Activated B cell treated with CpG ODN at 0.5 μM for 24 hours (primary cell): ENCODE measurements at regions of chr16 and their contacts with region 1.

Region 1: DNA sequence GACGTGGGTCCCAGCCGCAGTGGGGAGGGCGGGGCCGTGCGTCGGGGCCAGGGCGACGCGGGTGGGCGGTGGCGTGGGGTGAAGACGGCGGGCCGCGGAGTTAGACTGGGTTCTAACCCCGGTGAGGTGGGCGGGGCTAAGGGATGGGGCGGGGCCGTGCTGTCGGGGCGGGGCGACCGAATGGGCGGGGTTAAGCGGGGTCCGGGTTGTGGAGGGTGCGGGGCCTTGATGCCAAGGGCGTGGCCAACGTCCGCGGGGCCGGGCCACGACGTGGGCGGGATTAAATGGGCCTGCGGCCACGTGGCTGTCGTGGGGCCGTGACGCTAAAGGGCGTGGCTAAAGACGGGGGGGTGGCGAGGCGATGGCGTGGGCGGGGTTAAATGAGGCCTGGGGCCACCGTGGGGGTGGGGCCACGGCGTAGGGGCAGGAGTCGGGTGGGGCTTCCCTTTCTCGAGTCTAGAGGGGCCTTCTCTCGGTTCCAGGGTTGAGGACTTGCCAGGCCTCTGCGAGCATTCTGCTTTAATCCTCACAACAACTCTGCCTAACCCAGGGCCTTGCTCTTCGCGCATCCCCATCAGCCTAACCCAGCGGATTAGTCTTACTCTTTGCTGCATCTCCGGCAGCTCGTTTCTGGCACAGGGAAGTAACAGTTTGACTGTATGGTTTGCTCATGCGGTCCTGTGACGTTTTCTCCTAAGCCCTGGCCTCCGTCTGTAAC is 739 bp downstream of the TCF25 start:
- DNase-seq: peak; percentile 98
- ATAC-seq: peak; percentile 84
- H3K4me3 Mint-ChIP-seq: peak overlapping the region; percentile 93
- H3K27ac Mint-ChIP-seq: peak overlapping the region; percentile 97
- H3K4me1 Mint-ChIP-seq: peaks cover 17% of the 10 kb centered on the region
- H3K27me3 Mint-ChIP-seq: no peaks in the 10 kb centered on the region
- CTCF ChIP-seq: no peak

Region 2: GRCh38 chr16:89560378-89561141 is 313.6 kb before region 1 on chr16 and contains the start of gene RPL13:
- CTCF ChIA-PET with region 1: no interaction called
- POLR2A ChIA-PET with region 1: interaction called, 4 read pairs
- intact Hi-C with region 1: loop called (anchors 5 kb)
- DNase-seq: peak; percentile 83
- ATAC-seq: peak; percentile 92
- H3K4me3 Mint-ChIP-seq: peak within 1 kb of the TSS; percentile 96
- H3K27ac Mint-ChIP-seq: peak within 1 kb of the TSS; percentile 97
- H3K4me1 Mint-ChIP-seq: peaks cover 48% of the 10 kb centered on the region
- H3K27me3 Mint-ChIP-seq: no peaks in the 10 kb centered on the region
- CTCF ChIP-seq: no peak
- total RNA-seq, gene RPL13: 3,566 and 4,063 TPM in 2 replicates

Region 3: GRCh38 chr16:89686520-89687091 is 187.5 kb before region 1 on chr16 and contains the start of gene CDK10:
- CTCF ChIA-PET with region 1: no interaction called
- POLR2A ChIA-PET with region 1: interaction called, 6 read pairs
- intact Hi-C with region 1: loop called (anchors 5 kb)
- DNase-seq: peak; percentile 98
- ATAC-seq: peak; percentile 91
- H3K4me3 Mint-ChIP-seq: peak within 1 kb of the TSS; percentile 93
- H3K27ac Mint-ChIP-seq: peak within 1 kb of the TSS; percentile 90
- H3K4me1 Mint-ChIP-seq: peaks cover 18% of the 10 kb centered on the region
- H3K27me3 Mint-ChIP-seq: no peaks in the 10 kb centered on the region
- CTCF ChIP-seq: no peak
- total RNA-seq, gene CDK10: 67.9 and 76.1 TPM in 2 replicates

Region 4: DNA sequence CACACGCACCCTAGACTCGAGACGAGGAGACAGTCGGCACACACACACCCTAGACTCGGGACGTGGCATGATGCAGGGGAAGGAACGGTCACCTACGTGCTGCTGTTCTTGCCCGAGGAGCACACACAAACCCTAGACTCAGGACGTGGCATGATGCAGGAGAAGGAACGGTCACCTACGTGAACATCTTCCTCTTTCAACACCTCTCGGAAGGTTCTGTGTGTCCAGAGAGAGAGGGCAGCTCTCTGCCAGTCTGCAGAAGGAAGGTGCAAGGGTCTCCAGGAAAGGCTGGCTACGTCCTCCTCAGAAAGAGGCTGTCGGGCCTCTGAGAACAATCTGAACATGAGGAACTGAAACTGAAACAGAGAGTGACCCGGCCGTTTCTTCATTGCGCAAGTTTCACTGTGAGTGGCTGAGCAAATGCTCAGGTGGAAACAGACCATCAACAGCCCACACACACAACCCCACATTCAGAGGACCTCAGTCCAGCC is 109.4 kb before region 1 on chr16:
- CTCF ChIA-PET with region 1: no interaction called
- POLR2A ChIA-PET with region 1: interaction called, 12 read pairs
- intact Hi-C with region 1: no loop called
- DNase-seq: peak; percentile 62
- ATAC-seq: peak; percentile 83
- H3K4me3 Mint-ChIP-seq: peak overlapping the region; percentile 88
- H3K27ac Mint-ChIP-seq: peak overlapping the region; percentile 95
- H3K4me1 Mint-ChIP-seq: peaks cover 69% of the 10 kb centered on the region
- H3K27me3 Mint-ChIP-seq: no peaks in the 10 kb centered on the region
- CTCF ChIP-seq: no peak

Region 5: DNA sequence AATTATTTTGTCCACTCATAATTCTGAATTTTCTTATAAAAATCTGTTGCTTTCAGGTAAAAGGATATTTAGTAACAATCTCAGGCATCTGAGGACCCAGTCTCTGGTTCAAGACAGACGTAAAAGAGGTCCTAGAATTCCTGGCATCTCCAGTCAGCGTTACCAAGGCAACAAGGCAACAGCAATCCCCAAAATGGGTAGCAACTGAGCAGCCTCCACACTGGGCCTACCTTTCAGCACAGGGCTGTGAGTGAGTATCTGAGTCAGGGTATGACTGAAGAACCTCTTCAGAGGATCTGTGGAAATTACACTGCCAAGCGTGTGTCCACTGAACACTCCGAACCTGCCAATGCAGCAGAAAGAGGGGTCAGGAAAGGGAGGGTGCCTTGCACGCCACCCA is 78.5 kb before region 1 on chr16:
- CTCF ChIA-PET with region 1: no interaction called
- POLR2A ChIA-PET with region 1: no interaction called
- intact Hi-C with region 1: no loop called
- DNase-seq: no peak
- ATAC-seq: no peak
- H3K4me3 Mint-ChIP-seq: no peak overlapping the region
- H3K27ac Mint-ChIP-seq: no peak overlapping the region
- H3K4me1 Mint-ChIP-seq: peaks cover 2% of the 10 kb centered on the region
- H3K27me3 Mint-ChIP-seq: no peaks in the 10 kb centered on the region
- CTCF ChIP-seq: no peak

Region 6: GRCh38 chr16:89845417-89845816 is 28.7 kb before region 1 on chr16:
- CTCF ChIA-PET with region 1: no interaction called
- POLR2A ChIA-PET with region 1: no interaction called
- intact Hi-C with region 1: no loop called
- DNase-seq: no peak
- ATAC-seq: peak; percentile 21
- H3K4me3 Mint-ChIP-seq: peak overlapping the region; percentile 28
- H3K27ac Mint-ChIP-seq: no peak overlapping the region
- H3K4me1 Mint-ChIP-seq: peaks cover 12% of the 10 kb centered on the region
- H3K27me3 Mint-ChIP-seq: no peaks in the 10 kb centered on the region
- CTCF ChIP-seq: no peak

Region 7: DNA sequence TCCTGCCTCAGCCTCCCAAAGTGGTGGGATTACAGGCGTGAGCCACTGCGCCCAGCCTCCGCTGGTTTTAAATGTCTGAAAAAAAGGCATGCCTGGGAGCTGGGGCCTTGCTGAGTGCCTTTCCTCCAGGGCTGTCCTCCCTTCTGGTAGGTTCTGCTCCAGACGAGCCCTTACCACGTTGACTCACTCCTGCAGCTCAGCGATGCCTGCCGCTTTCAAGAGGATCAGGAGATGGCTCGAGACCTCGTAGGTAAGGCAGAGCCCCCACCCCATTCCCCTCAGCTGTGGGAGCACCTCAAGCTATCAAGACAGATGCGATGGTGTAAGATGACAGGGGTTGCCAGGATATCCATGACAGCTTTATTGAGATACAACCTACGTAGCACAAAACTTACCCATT is 20.8 kb after region 1 on chr16:
- CTCF ChIA-PET with region 1: no interaction called
- POLR2A ChIA-PET with region 1: no interaction called
- intact Hi-C with region 1: no loop called
- DNase-seq: no peak
- ATAC-seq: no peak
- H3K4me3 Mint-ChIP-seq: no peak overlapping the region
- H3K27ac Mint-ChIP-seq: no peak overlapping the region
- H3K4me1 Mint-ChIP-seq: no peaks in the 10 kb centered on the region
- H3K27me3 Mint-ChIP-seq: no peaks in the 10 kb centered on the region
- CTCF ChIP-seq: no peak

Region 8: GRCh38 chr16:89925596-89926079 is 51.5 kb after region 1 on chr16:
- CTCF ChIA-PET with region 1: no interaction called
- POLR2A ChIA-PET with region 1: interaction called, 5 read pairs
- intact Hi-C with region 1: loop called (anchors 1 kb)
- DNase-seq: no peak
- ATAC-seq: no peak
- H3K4me3 Mint-ChIP-seq: no peak overlapping the region
- H3K27ac Mint-ChIP-seq: no peak overlapping the region
- H3K4me1 Mint-ChIP-seq: peaks cover 25% of the 10 kb centered on the region
- H3K27me3 Mint-ChIP-seq: peaks cover 17% of the 10 kb centered on the region
- CTCF ChIP-seq: no peak

Region 9: GRCh38 chr16:90008708-90009535 is 134.8 kb after region 1 on chr16:
- CTCF ChIA-PET with region 1: no interaction called
- POLR2A ChIA-PET with region 1: interaction called, 4 read pairs
- intact Hi-C with region 1: loop called (anchors 5 kb)
- DNase-seq: peak; percentile 63
- ATAC-seq: peak; percentile 90
- H3K4me3 Mint-ChIP-seq: peak overlapping the region; percentile 60
- H3K27ac Mint-ChIP-seq: peak overlapping the region; percentile 76
- H3K4me1 Mint-ChIP-seq: peaks cover 63% of the 10 kb centered on the region
- H3K27me3 Mint-ChIP-seq: no peaks in the 10 kb centered on the region
- CTCF ChIP-seq: no peak